T-cell (primary cell): ENCODE measurements at regions of chr11 and their contacts with region 1.

Region 1: DNA sequence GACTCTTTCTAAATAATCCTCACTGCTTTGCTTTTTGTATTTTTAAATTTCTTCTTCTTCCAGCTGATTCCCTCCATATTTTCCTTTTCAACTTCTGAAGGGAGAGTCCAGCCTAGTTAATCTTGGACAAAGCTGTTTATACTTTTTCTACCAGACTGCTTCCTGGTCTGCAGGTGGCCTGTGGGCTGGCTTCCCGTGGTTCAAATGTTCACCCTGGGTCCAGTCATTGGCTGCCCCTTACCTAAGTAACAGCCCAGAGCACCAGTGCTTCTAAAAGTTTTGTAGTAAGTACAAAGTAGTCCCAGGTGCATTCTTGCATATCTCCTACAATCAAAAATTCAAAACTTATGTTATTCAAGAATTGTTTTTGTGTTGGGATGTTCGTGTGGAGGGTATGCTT is 19.1 kb downstream of the ZNF143 start:
- DNase-seq: no peak
- ATAC-seq: no peak
- H3K4me3 ChIP-seq: no peak overlapping the region
- H3K4me3 Mint-ChIP-seq: no peak overlapping the region
- H3K27ac ChIP-seq: no peak overlapping the region
- H3K27ac Mint-ChIP-seq: peak overlapping the region in 1 of 2 donors; percentile 48
- H3K4me1 ChIP-seq: no peaks in the 10 kb centered on the region
- H3K4me1 Mint-ChIP-seq: no peaks in the 10 kb centered on the region
- H3K27me3 ChIP-seq: no peaks in the 10 kb centered on the region
- H3K27me3 Mint-ChIP-seq: no peaks in the 10 kb centered on the region

Region 2: GRCh38 chr11:9493492-9493891 is 13.6 kb after region 1 on chr11:
- CTCF ChIA-PET with region 1: no interaction called
- POLR2A ChIA-PET with region 1: no interaction called
- DNase-seq: no peak
- ATAC-seq: no peak
- H3K4me3 ChIP-seq: no peak overlapping the region
- H3K4me3 Mint-ChIP-seq: no peak overlapping the region
- H3K27ac ChIP-seq: no peak overlapping the region
- H3K27ac Mint-ChIP-seq: no peak overlapping the region
- H3K4me1 ChIP-seq: no peaks in the 10 kb centered on the region
- H3K4me1 Mint-ChIP-seq: no peaks in the 10 kb centered on the region
- H3K27me3 ChIP-seq: no peaks in the 10 kb centered on the region
- H3K27me3 Mint-ChIP-seq: no peaks in the 10 kb centered on the region

Region 3: GRCh38 chr11:9562728-9563115 is 82.8 kb after region 1 on chr11:
- CTCF ChIA-PET with region 1: no interaction called
- POLR2A ChIA-PET with region 1: no interaction called
- DNase-seq: no peak
- ATAC-seq: no peak
- H3K4me3 ChIP-seq: no peak overlapping the region
- H3K4me3 Mint-ChIP-seq: no peak overlapping the region
- H3K27ac ChIP-seq: no peak overlapping the region
- H3K27ac Mint-ChIP-seq: no peak overlapping the region
- H3K4me1 ChIP-seq: peaks cover 0 to 3% of the 10 kb centered on the region in 2 experiments
- H3K4me1 Mint-ChIP-seq: peaks cover 0 to 9% (median 9%) of the 10 kb centered on the region in 3 donors
- H3K27me3 ChIP-seq: peaks cover 0 to 2% of the 10 kb centered on the region in 2 experiments
- H3K27me3 Mint-ChIP-seq: no peaks in the 10 kb centered on the region

Region 4: DNA sequence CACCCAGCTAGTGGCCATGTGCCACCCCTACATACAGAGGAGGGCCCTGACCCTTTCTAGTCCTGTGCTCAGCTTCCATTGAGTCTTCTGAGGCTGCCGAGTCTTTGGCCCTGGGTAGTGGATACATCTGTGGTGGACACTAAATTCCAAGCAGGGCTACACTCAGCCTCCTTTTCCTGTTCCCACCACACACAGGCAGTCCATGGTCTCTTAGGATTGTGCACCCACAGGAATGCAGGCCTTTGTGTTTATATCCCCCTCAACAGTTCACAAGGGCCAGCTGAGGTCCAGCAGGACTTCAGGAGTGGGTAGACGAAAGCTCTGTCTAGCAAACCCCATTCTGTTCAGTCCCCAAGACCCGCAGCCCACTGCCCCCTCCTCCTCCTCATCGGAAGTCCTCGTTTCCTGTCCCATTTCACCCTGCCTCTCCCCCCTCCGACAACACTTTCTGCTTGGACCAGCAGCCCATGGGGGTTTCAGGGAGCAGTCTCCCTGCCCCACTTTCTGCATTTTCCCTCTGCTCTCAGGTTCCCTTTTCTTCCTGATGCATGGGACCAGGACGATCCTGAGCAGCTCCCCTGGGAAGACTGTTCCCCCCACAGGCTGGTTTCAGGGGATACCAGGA is 275.8 kb after region 1 on chr11:
- CTCF ChIA-PET with region 1: interaction called in 1 of 2 experiments, 10 read pairs
- POLR2A ChIA-PET with region 1: no interaction called
- DNase-seq: no peak
- ATAC-seq: no peak
- H3K4me3 ChIP-seq: no peak overlapping the region
- H3K4me3 Mint-ChIP-seq: no peak overlapping the region
- H3K27ac ChIP-seq: no peak overlapping the region
- H3K27ac Mint-ChIP-seq: no peak overlapping the region
- H3K4me1 ChIP-seq: peaks cover 7 to 27% of the 10 kb centered on the region in 2 experiments
- H3K4me1 Mint-ChIP-seq: peaks cover 19 to 38% (median 24%) of the 10 kb centered on the region in 3 donors
- H3K27me3 ChIP-seq: no peaks in the 10 kb centered on the region
- H3K27me3 Mint-ChIP-seq: no peaks in the 10 kb centered on the region